ENCODE measurements at regions of chr15 and their contacts with region 1.

Region 1: DNA sequence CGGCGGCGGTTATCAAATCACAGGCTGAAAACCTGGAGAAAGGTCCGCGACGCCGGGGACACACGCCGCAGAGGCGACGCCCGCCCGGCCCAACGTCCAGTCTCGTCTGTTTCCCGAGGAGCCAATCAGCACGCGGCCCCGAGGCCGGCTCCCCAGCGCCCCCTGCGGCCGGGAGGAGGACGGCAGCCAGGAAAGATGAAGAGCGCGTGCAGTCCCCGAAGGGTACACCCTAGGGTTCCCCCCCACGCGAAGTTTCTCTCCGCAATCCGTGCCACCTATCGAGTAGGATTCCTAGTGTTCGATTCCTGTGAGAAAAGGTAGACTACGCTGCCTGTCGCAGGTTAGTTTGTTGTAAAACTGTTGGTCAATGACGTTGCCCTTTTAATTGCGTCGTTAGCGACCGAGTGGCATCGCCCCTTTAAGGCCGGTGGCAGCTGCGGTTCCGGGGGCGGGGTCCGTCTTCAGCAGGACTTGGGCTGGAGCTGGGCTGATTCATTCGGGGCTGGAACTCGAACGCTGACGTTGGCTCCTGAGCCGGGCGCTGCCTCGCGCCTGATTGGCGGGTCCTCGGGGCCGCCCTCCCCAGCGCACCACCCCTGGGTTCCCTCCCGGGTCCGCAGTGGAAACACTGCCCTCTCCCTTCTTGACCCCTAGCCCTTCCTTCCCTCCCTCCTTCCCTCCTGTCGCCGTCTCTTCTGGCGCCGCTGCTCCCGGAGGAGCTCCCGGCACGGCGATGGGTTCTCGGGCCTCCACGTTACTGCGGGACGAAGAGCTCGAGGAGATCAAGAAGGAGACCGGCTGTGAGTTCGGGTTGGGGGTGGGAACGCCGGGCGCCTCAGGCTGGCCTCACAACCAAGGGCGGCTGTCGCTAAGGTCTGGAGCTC is at the starts of genes CHP1 and EXD1:
- DNase-seq: peak; percentile 99
- total RNA-seq, gene CHP1: 104 TPM
- total RNA-seq, gene EXD1: not detected

Region 2: GRCh38 chr15:40847205-40847961 is 383.5 kb before region 1 on chr15:
- intact Hi-C with region 1: no loop called
- DNase-seq: peak; percentile 84

Region 3: GRCh38 chr15:40957581-40958051 is 273.3 kb before region 1 on chr15:
- intact Hi-C with region 1: no loop called
- DNase-seq: peak; percentile 85

Region 4: GRCh38 chr15:41269887-41270286 is 39.0 kb after region 1 on chr15:
- intact Hi-C with region 1: no loop called
- DNase-seq: no peak

Region 5: DNA sequence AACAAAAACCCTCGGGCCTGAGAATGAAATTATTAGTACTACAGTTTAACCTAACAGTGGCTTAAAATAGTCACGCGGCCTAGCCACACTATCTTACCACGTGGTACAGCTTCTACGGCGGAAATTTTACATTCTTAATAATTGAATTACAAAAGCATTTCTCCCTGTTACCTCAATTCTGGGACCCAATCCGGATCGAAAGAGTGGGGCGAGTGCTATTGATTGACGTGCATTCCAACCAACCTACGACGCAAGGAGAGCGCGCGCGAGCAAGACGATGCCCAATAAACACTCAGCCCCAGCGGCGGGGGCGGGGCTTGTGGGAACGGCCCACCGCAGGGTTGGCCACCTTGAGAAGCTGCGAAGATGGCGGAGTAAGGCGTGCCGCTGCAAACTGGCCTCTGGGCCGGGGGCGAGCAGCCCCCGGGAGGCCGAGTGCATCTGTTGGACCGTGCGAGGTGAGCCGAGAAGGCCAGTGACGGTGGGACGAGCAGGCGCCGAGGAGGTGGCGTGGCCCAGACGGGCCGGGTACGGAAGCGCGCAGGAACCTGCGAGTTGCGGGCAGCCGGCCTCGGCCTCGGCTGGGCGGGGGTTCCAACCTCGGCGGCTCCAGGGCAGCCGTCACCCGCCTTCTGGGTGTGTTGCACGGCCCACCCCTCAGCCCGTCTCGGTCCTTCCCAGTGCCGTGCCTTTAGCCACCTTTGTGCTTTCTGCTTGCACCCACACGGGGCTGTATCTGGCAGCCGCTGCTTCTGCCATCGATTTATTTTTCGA is 52.9 kb after region 1 on chr15:
- intact Hi-C with region 1: loop called (anchors 1 kb)
- DNase-seq: peak; percentile 98

Measured in cardiac septum (tissue), 1 donor.